ENCODE measurements at regions of chr15 and their contacts with region 1.

Region 1: DNA sequence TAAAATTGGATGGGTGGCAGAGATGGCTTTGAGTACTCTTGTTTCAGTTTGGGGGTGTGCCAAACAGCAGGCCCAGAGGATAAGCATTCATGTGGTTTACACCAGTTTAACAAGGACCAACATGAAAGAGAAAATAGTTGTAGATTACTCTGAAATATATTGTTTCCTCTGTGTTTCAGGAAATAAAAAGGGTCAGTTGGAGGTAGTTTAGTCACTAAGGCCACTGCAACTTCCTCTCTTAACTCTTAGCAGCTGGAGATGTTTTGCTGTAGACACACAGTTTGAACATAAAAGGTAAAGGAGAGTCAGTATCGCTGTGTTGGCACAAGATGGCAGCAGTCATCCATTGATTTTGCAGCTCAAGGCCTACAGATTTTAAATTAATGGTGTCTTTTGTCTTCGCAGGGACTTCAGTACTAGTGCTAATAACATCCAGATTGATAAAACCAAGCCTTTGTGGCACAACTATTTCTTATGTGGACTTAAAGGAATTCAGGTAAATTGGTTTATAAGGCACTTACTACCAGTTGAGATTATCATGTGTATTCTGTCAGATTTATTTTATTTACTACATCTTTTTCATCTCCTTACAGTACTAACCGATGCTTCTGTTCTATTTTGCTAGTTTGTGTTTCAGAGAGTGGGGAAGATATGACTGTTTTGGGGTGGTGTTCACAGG is 65.5 kb downstream of the GALK2 start:
- DNase-seq: peak; percentile 58
- ATAC-seq: peak; percentile 92
- H3K4me3 Mint-ChIP-seq: no peak overlapping the region
- H3K27ac Mint-ChIP-seq: peak overlapping the region; percentile 44
- H3K4me1 Mint-ChIP-seq: peaks cover 15% of the 10 kb centered on the region
- H3K27me3 Mint-ChIP-seq: no peaks in the 10 kb centered on the region
- CTCF ChIP-seq: peak; percentile 68

Region 2: GRCh38 chr15:49169880-49170597 is 65.5 kb before region 1 on chr15 and contains the start of gene GALK2:
- CTCF ChIA-PET with region 1: no interaction called
- POLR2A ChIA-PET with region 1: no interaction called
- intact Hi-C with region 1: no loop called
- DNase-seq: peak; percentile 85
- ATAC-seq: peak; percentile 99
- H3K4me3 Mint-ChIP-seq: peak within 1 kb of the TSS; percentile 89
- H3K27ac Mint-ChIP-seq: peak within 1 kb of the TSS; percentile 96
- H3K4me1 Mint-ChIP-seq: peaks cover 27% of the 10 kb centered on the region
- H3K27me3 Mint-ChIP-seq: no peaks in the 10 kb centered on the region
- CTCF ChIP-seq: no peak
- total RNA-seq, gene GALK2: 26.8 to 27.5 TPM

Region 3: DNA sequence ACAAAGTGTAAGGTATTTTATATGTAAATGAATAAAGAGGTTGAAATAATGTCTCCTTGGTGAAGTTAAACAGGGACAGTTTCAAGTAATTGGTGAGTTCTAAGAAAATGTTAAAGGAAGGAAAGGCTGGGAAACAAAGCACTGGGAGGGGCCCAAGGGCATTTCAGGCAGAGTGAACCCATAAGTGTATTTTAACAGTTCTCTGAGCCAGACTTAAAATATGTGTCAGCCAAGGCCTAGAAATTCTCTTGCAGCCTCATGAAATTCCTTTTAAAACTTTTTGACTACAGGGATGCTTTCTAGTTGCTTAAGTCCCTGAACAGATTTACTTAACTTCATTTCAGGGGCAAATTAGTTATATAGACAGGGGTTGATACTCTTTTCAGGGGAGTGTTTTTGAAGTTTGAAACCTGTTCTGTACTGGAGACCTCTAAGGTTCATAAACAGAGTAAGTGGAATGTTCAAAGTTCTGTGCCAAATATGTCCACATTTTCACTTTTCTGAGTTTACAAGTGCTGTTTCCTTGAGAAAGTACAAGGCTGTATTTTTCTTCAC is 12.0 kb after region 1 on chr15:
- CTCF ChIA-PET with region 1: interaction called, 14 read pairs
- POLR2A ChIA-PET with region 1: no interaction called
- intact Hi-C with region 1: no loop called
- DNase-seq: no peak
- ATAC-seq: no peak
- H3K4me3 Mint-ChIP-seq: no peak overlapping the region
- H3K27ac Mint-ChIP-seq: no peak overlapping the region
- H3K4me1 Mint-ChIP-seq: no peaks in the 10 kb centered on the region
- H3K27me3 Mint-ChIP-seq: no peaks in the 10 kb centered on the region
- CTCF ChIP-seq: no peak

Region 4: DNA sequence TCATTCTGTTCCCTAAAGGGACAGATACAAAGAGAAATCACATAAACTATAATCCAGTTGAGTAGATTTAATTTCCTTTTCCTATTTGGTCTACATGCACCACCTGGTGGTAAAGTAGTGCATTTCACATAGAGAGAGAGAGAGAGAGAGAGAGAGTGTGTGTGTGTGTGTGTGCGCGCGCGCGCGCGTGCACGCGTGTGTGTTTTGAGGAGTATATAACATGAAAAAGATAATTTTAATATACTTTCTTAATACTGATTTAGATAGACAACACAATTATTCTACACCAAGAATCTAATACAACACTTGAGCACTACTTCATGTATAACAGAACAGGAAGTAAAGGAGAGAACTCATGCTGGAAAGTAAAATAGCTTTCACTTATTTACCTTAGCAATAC is 186.4 kb after region 1 on chr15:
- CTCF ChIA-PET with region 1: interaction called, 65 read pairs
- POLR2A ChIA-PET with region 1: no interaction called
- intact Hi-C with region 1: loop called (anchors 1 kb)
- DNase-seq: peak; percentile 45
- ATAC-seq: peak; percentile 71
- H3K4me3 Mint-ChIP-seq: no peak overlapping the region
- H3K27ac Mint-ChIP-seq: no peak overlapping the region
- H3K4me1 Mint-ChIP-seq: no peaks in the 10 kb centered on the region
- H3K27me3 Mint-ChIP-seq: no peaks in the 10 kb centered on the region
- CTCF ChIP-seq: peak; percentile 80

Region 5: DNA sequence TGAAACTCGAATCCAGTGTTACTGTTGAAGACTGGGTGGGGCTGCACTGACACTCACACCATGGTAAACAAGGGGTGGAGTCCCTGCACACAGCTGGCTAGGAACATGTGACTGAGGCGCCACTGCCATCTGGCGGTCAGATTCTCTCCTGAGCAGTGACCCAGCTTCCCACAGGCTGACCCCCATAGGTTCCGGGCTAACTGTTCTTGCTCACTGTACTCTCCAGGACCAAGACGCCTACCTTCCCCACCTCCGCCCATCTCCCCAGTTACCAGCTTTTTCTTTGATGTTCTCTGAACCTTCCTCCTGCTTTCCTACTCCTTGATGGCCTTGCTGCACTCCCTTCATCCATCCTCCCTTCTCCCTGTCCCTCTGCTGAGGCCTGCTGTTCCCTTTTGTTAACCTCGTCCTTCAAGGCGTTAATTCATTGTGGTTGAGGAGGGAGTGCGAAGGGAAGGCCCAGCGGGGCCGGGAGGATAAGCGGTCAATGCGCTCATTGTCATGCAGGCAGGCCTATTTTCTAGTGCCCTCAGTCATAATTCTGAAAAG is 768.3 kb after region 1 on chr15:
- CTCF ChIA-PET with region 1: interaction called, 10 read pairs
- POLR2A ChIA-PET with region 1: no interaction called
- intact Hi-C with region 1: no loop called
- DNase-seq: peak; percentile 75
- ATAC-seq: peak; percentile 91
- H3K4me3 Mint-ChIP-seq: no peak overlapping the region
- H3K27ac Mint-ChIP-seq: no peak overlapping the region
- H3K4me1 Mint-ChIP-seq: peaks cover 2% of the 10 kb centered on the region
- H3K27me3 Mint-ChIP-seq: no peaks in the 10 kb centered on the region
- CTCF ChIP-seq: peak; percentile 36

Measured in activated CD8-positive, alpha-beta T cell treated with anti-CD3 and anti-CD28 coated beads for 36 hours (primary cell).